Activated CD4-positive, alpha-beta T cell treated with anti-CD3 and anti-CD28 coated beads, Interleukin-2, amount 10 ng/mL, durations not matched to agents 7 days and 5 days (primary cell): ENCODE measurements at regions of chr12 and their contacts with region 1.

Region 1: DNA sequence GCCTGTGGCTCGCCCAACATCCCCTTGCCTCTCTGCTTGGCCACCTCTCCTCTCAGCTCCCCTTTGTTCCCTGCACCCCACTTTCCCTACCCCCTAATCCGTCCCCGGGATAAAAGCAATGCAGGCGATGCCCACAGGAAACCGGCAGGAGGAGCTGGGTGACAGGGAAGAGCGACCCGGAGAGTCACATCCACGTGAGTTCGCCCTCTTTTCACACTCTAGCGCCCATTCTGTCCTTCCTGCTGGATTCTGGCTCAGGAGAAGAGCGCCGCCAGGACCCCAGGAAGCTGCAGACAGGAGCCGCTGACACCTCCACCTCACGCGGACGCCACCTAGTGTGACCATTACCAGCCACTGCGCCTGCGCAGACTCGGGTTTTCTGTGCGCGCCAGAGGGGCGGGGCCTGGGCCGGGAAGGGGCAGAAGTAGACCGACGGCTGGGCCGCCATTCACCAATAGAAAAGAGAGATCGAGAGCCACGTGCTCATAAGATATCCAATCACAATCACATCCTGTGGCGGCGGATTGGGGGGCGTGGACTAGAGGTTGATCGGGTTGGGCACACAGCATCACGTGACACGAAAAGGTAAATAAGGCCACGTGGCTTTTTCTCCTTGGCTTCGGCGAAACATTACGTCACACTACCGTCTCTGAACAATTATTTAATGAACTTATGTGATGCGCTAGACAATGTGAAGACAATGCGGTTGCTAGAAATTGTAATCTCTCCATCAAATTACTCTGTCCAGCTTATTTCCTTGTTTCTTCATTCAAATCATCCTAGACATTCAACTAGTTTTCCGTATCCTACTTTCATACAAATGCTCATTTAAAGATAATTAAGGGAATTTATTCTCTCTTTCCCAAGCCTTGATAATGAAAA is 10.1 kb downstream of the PLA2G1B start:
- DNase-seq: peak; percentile 100
- H3K4me3 Mint-ChIP-seq: peak overlapping the region; percentile 87
- H3K27ac Mint-ChIP-seq: peak overlapping the region; percentile 96
- H3K4me1 Mint-ChIP-seq: peaks cover 16% of the 10 kb centered on the region
- H3K27me3 Mint-ChIP-seq: no peaks in the 10 kb centered on the region

Region 2: GRCh38 chr12:120301962-120302815 is 15.3 kb before region 1 on chr12 and contains the start of gene SIRT4:
- CTCF ChIA-PET with region 1: interaction called, 19 read pairs
- POLR2A ChIA-PET with region 1: no interaction called
- DNase-seq: peak; percentile 95
- H3K4me3 Mint-ChIP-seq: peak within 1 kb of the TSS; percentile 87
- H3K27ac Mint-ChIP-seq: peak within 1 kb of the TSS; percentile 87
- H3K4me1 Mint-ChIP-seq: peaks cover 8% of the 10 kb centered on the region
- H3K27me3 Mint-ChIP-seq: no peaks in the 10 kb centered on the region
- total RNA-seq, gene SIRT4: 0.94 to 1.8 TPM

Region 3: DNA sequence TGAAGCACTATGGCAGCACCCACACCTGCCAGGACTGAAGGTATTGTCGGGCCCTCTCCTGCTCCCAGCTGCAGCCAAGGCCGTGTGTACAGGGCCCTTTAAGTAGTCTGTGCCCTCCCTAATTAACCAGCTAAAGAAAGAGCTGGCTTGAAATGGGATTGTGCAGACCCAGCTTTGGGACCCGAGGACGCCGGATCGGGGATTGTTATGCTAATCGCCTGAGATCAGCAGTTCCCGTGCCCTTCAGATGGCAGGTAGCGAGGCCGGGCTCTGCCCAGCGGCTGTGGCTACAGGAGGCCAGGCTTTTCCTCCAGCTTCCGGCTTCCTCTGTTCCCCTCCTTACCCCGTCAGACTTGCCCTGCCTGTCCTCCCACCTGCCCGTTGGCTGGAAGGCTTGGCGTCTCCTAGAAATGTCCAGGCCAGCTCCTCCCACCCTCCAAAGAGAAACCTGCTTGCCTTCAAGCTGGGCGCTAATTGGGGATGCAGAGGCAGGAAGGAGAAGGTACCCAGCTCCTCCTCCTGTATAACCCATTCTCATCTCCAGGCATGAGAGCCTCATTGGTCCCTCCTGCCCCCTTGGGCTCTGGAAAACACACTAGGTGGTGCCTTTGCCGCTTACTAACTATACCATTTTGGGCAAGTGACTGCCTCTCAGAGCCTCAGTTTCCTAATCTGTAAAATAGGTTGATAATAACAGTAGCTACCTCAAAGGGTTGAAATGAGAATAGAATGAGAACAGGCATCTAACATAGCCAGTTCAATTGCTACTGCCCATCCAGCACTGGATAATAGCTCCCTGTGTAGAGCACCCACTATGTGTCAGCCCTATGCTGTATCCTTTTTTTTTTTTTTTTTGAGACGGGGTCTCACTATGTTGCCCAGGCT is 77.3 kb after region 1 on chr12:
- CTCF ChIA-PET with region 1: no interaction called
- POLR2A ChIA-PET with region 1: interaction called, 11 read pairs
- DNase-seq: no peak
- H3K4me3 Mint-ChIP-seq: no peak overlapping the region
- H3K27ac Mint-ChIP-seq: no peak overlapping the region
- H3K4me1 Mint-ChIP-seq: no peaks in the 10 kb centered on the region
- H3K27me3 Mint-ChIP-seq: peaks cover 21% of the 10 kb centered on the region